Vagina (tissue), 2 donors: ENCODE measurements at regions of chr11 and their contacts with region 1.

Region 1: GRCh38 chr11:65117216-65118096 is at the start of gene ZNHIT2:
- DNase-seq: peak in 1 of 2 donors; percentile 98
- H3K4me3 ChIP-seq: peak within 1 kb of the TSS; percentile 79 to 98
- H3K27ac ChIP-seq: peak within 1 kb of the TSS; percentile 71
- H3K4me1 ChIP-seq: peaks cover 46% of the 10 kb centered on the region
- H3K27me3 ChIP-seq: no peaks in the 10 kb centered on the region
- CTCF ChIP-seq: peak; percentile 92 to 97 (median 96)
- POLR2A ChIP-seq: no peak
- total RNA-seq, gene ZNHIT2: 15.7 TPM

Region 2: GRCh38 chr11:65013692-65014145 is 103.7 kb before region 1 on chr11:
- intact Hi-C with region 1: loop called (anchors 5 kb)
- DNase-seq: peak in 1 of 2 donors; percentile 93
- H3K4me3 ChIP-seq: peak overlapping the region; percentile 72 to 74
- H3K27ac ChIP-seq: peak overlapping the region; percentile 98
- H3K4me1 ChIP-seq: peaks cover 19% of the 10 kb centered on the region
- H3K27me3 ChIP-seq: no peaks in the 10 kb centered on the region
- CTCF ChIP-seq: peak in 2 of 3 experiments; percentile 42 to 85
- POLR2A ChIP-seq: peak in 1 of 2 donors; percentile 22

Region 3: GRCh38 chr11:65329944-65330403 is 212.5 kb after region 1 on chr11:
- intact Hi-C with region 1: loop called (anchors 10 kb)
- DNase-seq: no peak
- H3K4me3 ChIP-seq: no peak overlapping the region
- H3K27ac ChIP-seq: no peak overlapping the region
- H3K4me1 ChIP-seq: peaks cover 15% of the 10 kb centered on the region
- H3K27me3 ChIP-seq: no peaks in the 10 kb centered on the region
- CTCF ChIP-seq: peak; percentile 47 to 81 (median 73)
- POLR2A ChIP-seq: no peak